Breast epithelium (tissue), 4 donors: ENCODE measurements at regions of chr17 and their contacts with region 1.

Region 1: DNA sequence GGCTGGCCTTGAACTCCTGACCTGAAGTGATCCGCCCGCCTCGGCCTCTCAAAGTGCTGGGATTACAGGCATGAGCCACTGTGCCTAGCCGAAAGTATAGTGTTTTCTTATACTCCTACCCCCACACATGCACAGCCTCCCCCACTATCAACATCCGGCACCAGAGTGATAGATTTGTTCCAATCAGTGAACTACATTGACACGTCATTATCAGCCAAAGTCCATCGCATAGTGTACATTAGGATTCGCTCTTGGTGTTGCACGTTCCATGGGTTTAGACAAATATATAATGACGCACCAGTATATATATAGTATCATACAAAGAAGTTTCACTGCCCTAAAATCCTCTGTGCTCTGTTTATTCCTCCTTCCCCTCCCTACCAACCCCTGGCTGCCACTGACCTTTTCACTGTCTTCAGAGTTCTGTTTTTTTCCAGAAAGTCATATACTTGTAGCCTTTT is 11.9 kb upstream of the TM4SF5 start:
- DNase-seq: no peak
- H3K4me3 ChIP-seq: no peak overlapping the region
- H3K27ac ChIP-seq: no peak overlapping the region
- H3K4me1 ChIP-seq: no peaks in the 10 kb centered on the region
- H3K27me3 ChIP-seq: no peaks in the 10 kb centered on the region
- CTCF ChIP-seq: no peak
- POLR2A ChIP-seq: no peak

Region 2: GRCh38 chr17:2801841-2802240 is 1958.0 kb before region 1 on chr17:
- intact Hi-C with region 1: loop called (anchors 10 kb)
- DNase-seq: no peak
- H3K4me3 ChIP-seq: no peak overlapping the region
- H3K27ac ChIP-seq: no peak overlapping the region
- H3K4me1 ChIP-seq: no peaks in the 10 kb centered on the region
- H3K27me3 ChIP-seq: peaks cover 0 to 8% of the 10 kb centered on the region in 2 donors
- CTCF ChIP-seq: no peak
- POLR2A ChIP-seq: no peak

Region 3: GRCh38 chr17:6027342-6028024 is 1267.7 kb after region 1 on chr17:
- intact Hi-C with region 1: no loop called
- DNase-seq: no peak
- H3K4me3 ChIP-seq: no peak overlapping the region
- H3K27ac ChIP-seq: no peak overlapping the region
- H3K4me1 ChIP-seq: no peaks in the 10 kb centered on the region
- H3K27me3 ChIP-seq: peaks cover 0 to 37% of the 10 kb centered on the region in 2 donors
- CTCF ChIP-seq: no peak
- POLR2A ChIP-seq: no peak